WTC11 (cell line): ENCODE measurements at regions of chr11 and their contacts with region 1.

Region 1: GRCh38 chr11:131579932-131580387 is 209.5 kb downstream of the NTM start:
- DNase-seq: peak; percentile 70
- ATAC-seq: peak; percentile 97
- H3K4me3 Mint-ChIP-seq: no peak overlapping the region
- H3K27ac Mint-ChIP-seq: no peak overlapping the region
- H3K4me1 Mint-ChIP-seq: peaks cover 40% of the 10 kb centered on the region
- H3K27me3 Mint-ChIP-seq: no peaks in the 10 kb centered on the region
- CTCF ChIP-seq: peak; percentile 68

Region 2: GRCh38 chr11:131544591-131544990 is 35.4 kb before region 1 on chr11:
- CTCF ChIA-PET with region 1: interaction called, 10 read pairs
- POLR2A ChIA-PET with region 1: no interaction called
- DNase-seq: peak; percentile 68
- ATAC-seq: peak; percentile 93
- H3K4me3 Mint-ChIP-seq: no peak overlapping the region
- H3K27ac Mint-ChIP-seq: no peak overlapping the region
- H3K4me1 Mint-ChIP-seq: peaks cover 25% of the 10 kb centered on the region
- H3K27me3 Mint-ChIP-seq: no peaks in the 10 kb centered on the region
- CTCF ChIP-seq: no peak

Region 3: GRCh38 chr11:131591051-131591461 is 11.1 kb after region 1 on chr11:
- CTCF ChIA-PET with region 1: interaction called, 19 read pairs
- POLR2A ChIA-PET with region 1: no interaction called
- DNase-seq: peak; percentile 45
- ATAC-seq: peak; percentile 66
- H3K4me3 Mint-ChIP-seq: no peak overlapping the region
- H3K27ac Mint-ChIP-seq: no peak overlapping the region
- H3K4me1 Mint-ChIP-seq: peaks cover 56% of the 10 kb centered on the region
- H3K27me3 Mint-ChIP-seq: no peaks in the 10 kb centered on the region; the same call in 1 of the 2 replicates
- CTCF ChIP-seq: no peak

Region 4: DNA sequence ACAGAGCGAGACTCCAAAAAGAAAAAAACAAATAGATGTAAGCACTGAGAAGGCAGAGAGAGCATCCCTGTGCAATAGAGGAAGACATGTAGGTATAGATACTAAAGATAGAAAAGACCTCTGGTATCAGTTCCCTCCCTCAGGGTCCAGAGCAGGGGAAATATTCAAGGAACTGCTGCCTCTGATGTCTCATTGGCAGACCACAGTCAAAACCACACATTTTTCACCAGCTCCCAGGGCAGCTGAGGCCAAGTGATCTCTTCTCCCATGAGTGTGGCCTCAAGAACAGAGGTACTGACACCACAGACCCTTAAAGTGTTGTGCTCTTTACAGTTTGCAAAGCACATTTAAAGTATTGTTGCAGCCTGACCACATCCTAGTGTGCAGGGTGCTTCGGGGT is 79.0 kb after region 1 on chr11:
- CTCF ChIA-PET with region 1: interaction called, 16 read pairs
- POLR2A ChIA-PET with region 1: no interaction called
- DNase-seq: no peak
- ATAC-seq: no peak
- H3K4me3 Mint-ChIP-seq: no peak overlapping the region
- H3K27ac Mint-ChIP-seq: no peak overlapping the region
- H3K4me1 Mint-ChIP-seq: peaks cover 94% of the 10 kb centered on the region
- H3K27me3 Mint-ChIP-seq: no peaks in the 10 kb centered on the region; the same call in 1 of the 2 replicates
- CTCF ChIP-seq: no peak

Region 5: GRCh38 chr11:131688051-131688698 is 108.2 kb after region 1 on chr11:
- CTCF ChIA-PET with region 1: interaction called, 22 read pairs
- POLR2A ChIA-PET with region 1: no interaction called
- DNase-seq: peak; percentile 81
- ATAC-seq: peak; percentile 62
- H3K4me3 Mint-ChIP-seq: no peak overlapping the region
- H3K27ac Mint-ChIP-seq: no peak overlapping the region
- H3K4me1 Mint-ChIP-seq: 0 out of 2 replicates have a peak, but pooled peaks cover 6% of the 10 kb centered on the region
- H3K27me3 Mint-ChIP-seq: peaks cover 24% of the 10 kb centered on the region
- CTCF ChIP-seq: peak; percentile 81